ENCODE measurements at regions of chr14 and their contacts with region 1.

Region 1: DNA sequence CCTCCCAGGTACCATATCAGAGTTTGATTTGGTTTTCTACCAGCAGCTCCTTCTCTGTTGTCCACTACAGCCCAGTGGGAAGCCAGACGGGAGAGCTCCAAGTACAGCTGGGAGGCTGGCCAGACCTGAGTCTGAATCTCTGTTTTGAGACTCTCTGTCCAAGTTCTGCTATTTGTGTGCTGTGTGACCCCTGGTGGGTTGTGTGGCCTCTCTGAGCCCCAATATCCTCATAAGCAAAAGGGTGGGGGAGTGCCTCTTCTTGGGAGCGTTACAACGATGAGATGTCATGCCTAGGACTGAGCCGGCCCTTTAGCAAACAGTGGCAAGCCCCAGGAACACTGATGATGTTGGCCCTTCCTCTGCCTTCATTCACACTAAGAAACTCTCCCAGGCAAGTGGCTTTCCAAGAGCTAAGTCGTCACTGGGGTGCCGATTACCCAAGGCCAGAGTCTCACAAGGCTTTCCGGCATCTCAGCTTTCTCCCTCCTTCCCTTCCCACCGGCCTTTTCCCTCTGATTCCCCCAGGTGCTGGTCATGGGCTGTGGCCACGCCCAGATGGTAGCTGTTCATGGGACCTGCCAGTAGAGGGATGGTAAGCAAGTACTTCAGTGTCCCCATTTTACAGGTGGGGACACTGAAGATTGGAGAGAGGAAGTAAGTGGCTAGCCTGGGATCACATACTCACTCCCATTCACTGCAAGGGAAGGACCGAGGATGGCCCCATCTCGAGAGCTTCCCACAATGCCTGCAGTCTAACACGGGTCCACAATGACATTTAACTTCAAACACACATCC is 47.7 kb downstream of the BCL11B start:
- DNase-seq: no peak
- H3K4me3 Mint-ChIP-seq: peak overlapping the region; percentile 19
- H3K27ac Mint-ChIP-seq: peak overlapping the region; percentile 98
- H3K4me1 Mint-ChIP-seq: peaks cover 95% of the 10 kb centered on the region
- H3K27me3 Mint-ChIP-seq: no peaks in the 10 kb centered on the region

Region 2: GRCh38 chr14:98731701-98732100 is 492.6 kb before region 1 on chr14:
- CTCF ChIA-PET with region 1: no interaction called
- POLR2A ChIA-PET with region 1: no interaction called
- DNase-seq: no peak
- H3K4me3 Mint-ChIP-seq: no peak overlapping the region
- H3K27ac Mint-ChIP-seq: no peak overlapping the region
- H3K4me1 Mint-ChIP-seq: no peaks in the 10 kb centered on the region
- H3K27me3 Mint-ChIP-seq: peaks cover 3% of the 10 kb centered on the region

Region 3: GRCh38 chr14:99064226-99064954 is 159.9 kb before region 1 on chr14:
- CTCF ChIA-PET with region 1: no interaction called
- POLR2A ChIA-PET with region 1: no interaction called
- DNase-seq: no peak
- H3K4me3 Mint-ChIP-seq: no peak overlapping the region
- H3K27ac Mint-ChIP-seq: no peak overlapping the region
- H3K4me1 Mint-ChIP-seq: no peaks in the 10 kb centered on the region
- H3K27me3 Mint-ChIP-seq: no peaks in the 10 kb centered on the region

Region 4: DNA sequence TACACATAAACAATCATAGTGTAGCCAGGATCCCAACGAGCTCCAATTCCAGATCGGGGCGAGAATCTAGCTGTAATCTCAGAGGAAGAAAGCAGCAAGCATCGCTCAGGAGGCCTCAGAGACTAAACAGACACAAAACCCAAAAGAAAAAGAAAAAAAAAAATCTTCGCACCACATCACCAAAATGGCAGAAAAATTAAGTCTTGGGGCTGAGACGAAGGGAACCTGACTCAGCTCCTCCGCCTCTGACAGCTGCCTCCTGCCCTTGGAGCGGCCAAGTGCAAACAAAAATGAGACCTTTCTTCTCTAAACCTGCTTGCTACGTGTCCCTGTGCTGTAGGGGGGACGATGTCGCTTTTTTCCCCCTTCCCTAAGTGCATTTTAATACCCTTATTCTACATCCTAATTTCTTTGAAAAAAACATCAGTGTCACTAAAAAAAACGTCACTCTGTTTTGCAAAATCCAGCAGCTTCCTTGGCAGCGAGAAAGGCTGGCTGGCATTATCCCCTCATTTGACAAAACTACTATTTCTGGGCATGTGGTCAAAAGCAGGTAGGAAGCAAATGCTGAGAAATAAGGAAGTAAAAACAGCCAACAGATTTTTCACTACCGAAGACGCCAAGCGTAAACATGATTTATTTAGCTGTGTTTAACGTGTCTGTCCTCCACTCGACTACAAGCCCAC is 17.2 kb after region 1 on chr14:
- CTCF ChIA-PET with region 1: interaction called, 15 read pairs
- POLR2A ChIA-PET with region 1: interaction called, 3 read pairs
- DNase-seq: peak; percentile 55
- H3K4me3 Mint-ChIP-seq: peak overlapping the region; percentile 78
- H3K27ac Mint-ChIP-seq: peak overlapping the region; percentile 96
- H3K4me1 Mint-ChIP-seq: peaks cover 87% of the 10 kb centered on the region
- H3K27me3 Mint-ChIP-seq: no peaks in the 10 kb centered on the region